Activated B cell treated with CpG ODN at 0.5 μM for 24 hours (primary cell): ENCODE measurements at regions of chr17 and their contacts with region 1.

Region 1: DNA sequence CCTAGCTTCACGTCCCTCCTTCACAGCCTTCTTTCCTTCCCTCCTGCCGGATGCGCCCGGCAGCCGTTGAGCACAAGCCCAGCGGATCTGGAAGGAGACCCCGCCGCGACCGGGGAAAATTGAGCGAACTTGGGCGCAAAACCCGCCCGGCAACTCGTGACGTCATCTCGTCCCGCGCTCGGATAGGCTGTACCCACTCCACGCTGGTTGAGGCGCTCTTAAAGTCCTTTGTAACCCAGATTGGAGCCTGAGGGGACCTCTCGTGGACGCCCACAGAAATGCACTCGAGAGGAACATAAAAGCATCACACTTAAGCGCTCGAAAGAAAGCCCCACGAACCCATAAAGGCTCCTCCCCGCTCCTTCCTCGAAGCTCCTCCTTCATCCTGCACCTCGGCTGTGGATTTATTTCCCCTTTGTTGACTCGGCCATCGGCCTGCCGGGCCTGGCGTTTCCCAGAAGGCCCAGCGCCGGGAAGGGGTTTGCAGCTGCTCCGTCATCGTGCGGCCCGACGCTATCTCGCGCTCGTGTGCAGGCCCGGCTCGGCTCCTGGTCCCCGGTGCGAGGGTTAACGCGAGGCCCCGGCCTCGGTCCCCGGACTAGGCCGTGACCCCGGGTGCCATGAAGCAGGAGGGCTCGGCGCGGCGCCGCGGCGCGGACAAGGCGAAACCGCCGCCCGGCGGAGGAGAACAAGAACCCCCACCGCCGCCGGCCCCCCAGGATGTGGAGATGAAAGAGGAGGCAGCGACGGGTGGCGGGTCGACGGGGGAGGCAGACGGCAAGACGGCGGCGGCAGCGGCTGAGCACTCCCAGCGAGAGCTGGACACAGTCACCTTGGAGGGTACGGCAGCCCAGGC is at the start of gene PSMD3:
- DNase-seq: peak; percentile 90
- ATAC-seq: peak; percentile 93
- H3K4me3 Mint-ChIP-seq: peak within 1 kb of the TSS; percentile 96
- H3K27ac Mint-ChIP-seq: peak within 1 kb of the TSS; percentile 96
- H3K4me1 Mint-ChIP-seq: peaks cover 36% of the 10 kb centered on the region
- H3K27me3 Mint-ChIP-seq: peaks cover under 1% of the 10 kb centered on the region
- CTCF ChIP-seq: no peak
- total RNA-seq, gene PSMD3: 115 and 127 TPM in 2 replicates

Region 2: GRCh38 chr17:39461113-39461925 is 519.3 kb before region 1 on chr17 and contains the start of gene CDK12:
- CTCF ChIA-PET with region 1: no interaction called
- POLR2A ChIA-PET with region 1: interaction called, 3 read pairs
- intact Hi-C with region 1: loop called (anchors 1 kb)
- DNase-seq: peak; percentile 87
- ATAC-seq: peak; percentile 87
- H3K4me3 Mint-ChIP-seq: peak within 1 kb of the TSS; percentile 97
- H3K27ac Mint-ChIP-seq: peak within 1 kb of the TSS; percentile 98
- H3K4me1 Mint-ChIP-seq: peaks cover 50% of the 10 kb centered on the region
- H3K27me3 Mint-ChIP-seq: no peaks in the 10 kb centered on the region
- CTCF ChIP-seq: no peak
- total RNA-seq, gene CDK12: 100 and 118 TPM in 2 replicates

Region 3: DNA sequence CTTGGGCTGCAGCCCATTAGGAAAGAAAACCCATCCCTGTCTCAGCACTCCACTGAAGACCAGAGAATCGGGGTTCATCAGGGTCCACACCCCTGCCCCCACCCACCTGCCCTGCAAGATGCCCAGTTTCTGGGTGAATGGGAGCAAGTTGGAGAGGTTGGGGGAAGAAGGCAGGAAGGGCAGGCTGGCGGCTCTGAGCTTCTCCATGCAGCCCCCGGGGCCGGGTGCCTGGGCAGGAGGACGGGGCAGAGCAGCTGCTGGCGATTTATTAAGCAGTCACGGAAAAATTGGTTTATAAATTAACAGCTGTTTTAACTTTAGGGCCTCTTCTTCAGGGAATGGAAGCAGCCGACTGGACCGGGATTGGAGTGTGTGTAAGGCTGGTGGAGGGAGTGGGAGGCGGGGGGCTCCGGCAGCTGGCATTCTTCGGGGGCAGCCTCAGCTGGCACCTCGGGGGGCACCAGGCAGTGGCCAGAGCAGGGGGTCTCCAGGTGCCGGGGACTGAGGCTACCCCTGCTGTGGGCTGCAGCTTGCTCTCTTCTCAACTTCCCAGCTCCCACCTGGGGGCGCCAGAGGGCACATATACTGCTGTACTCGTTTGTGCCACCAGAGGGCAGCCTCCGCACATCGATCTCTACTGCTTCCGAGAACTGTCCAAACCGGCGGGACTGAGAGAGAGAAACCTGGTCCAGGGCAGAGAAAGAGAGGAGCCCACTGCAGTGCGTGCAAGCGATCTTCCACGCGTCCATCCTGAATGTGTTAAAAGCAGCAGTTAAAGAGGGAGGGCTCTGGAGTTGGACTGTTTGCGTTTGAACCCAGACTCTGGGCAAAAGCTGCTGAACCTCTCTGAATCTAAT is 358.8 kb before region 1 on chr17:
- CTCF ChIA-PET with region 1: interaction called, 26 read pairs
- POLR2A ChIA-PET with region 1: interaction called, 17 read pairs
- intact Hi-C with region 1: loop called (anchors 1 kb)
- DNase-seq: peak; percentile 92
- ATAC-seq: peak; percentile 77
- H3K4me3 Mint-ChIP-seq: peak overlapping the region; percentile 70
- H3K27ac Mint-ChIP-seq: peak overlapping the region; percentile 60
- H3K4me1 Mint-ChIP-seq: peaks cover 26% of the 10 kb centered on the region
- H3K27me3 Mint-ChIP-seq: peaks cover 16% of the 10 kb centered on the region
- CTCF ChIP-seq: peak; percentile 97

Region 4: GRCh38 chr17:39730095-39730921 is 250.3 kb before region 1 on chr17 and contains the start of gene MIEN1:
- CTCF ChIA-PET with region 1: interaction called, 9 read pairs
- POLR2A ChIA-PET with region 1: interaction called, 14 read pairs
- intact Hi-C with region 1: loop called (anchors 1 kb)
- DNase-seq: peak; percentile 99
- ATAC-seq: peak; percentile 91
- H3K4me3 Mint-ChIP-seq: peak within 1 kb of the TSS; percentile 88
- H3K27ac Mint-ChIP-seq: peak within 1 kb of the TSS; percentile 86
- H3K4me1 Mint-ChIP-seq: peaks cover 21% of the 10 kb centered on the region
- H3K27me3 Mint-ChIP-seq: no peaks in the 10 kb centered on the region
- CTCF ChIP-seq: peak; percentile 64
- total RNA-seq, gene MIEN1: 42.2 and 45.7 TPM in 2 replicates

Region 5: DNA sequence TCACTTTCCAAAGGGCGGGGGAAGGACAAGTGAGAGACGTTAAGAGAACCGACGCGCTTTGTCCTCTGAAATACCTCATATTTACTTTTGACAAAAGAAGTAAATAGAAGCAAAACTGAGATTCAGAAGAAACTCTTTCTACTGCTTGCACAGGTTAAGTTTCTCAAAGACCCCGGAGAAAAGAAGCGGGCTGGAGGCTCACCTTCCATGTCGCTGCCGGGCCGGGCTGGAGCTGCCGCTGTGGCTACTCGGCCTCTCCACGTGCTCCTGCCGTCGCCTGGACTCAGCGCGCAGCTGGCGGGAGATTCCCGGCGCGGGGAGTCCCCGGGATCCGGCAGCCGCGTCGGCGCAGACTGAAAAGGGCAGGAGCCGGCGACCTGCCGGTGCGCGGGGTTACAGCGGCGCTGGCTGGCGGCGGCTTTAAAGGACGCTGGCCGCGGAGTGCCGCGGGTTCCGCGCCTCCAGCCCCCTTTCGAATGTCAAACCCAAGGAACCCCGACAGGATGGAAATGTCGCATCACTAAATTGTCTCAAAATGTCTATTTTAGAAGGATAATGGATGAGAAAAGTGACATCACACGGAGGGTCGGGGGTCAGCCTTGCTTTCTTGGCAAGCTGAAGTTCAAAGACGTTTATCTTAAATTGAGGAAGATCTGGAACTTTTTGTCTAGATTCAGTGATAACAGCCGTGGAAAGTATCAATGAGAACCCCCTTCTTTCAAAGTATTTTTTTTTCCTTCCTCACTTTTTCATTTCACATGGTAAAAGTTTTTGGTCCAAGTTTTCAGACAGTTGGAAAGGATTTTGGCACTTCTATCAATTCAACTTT is 116.4 kb before region 1 on chr17 and contains the start of gene IKZF3:
- CTCF ChIA-PET with region 1: interaction called, 3 read pairs
- POLR2A ChIA-PET with region 1: interaction called, 13 read pairs
- intact Hi-C with region 1: loop called (anchors 2 kb)
- DNase-seq: peak; percentile 78
- ATAC-seq: peak; percentile 58
- H3K4me3 Mint-ChIP-seq: peak within 1 kb of the TSS; percentile 98
- H3K27ac Mint-ChIP-seq: peak within 1 kb of the TSS; percentile 99
- H3K4me1 Mint-ChIP-seq: peaks cover 71% of the 10 kb centered on the region
- H3K27me3 Mint-ChIP-seq: no peaks in the 10 kb centered on the region
- CTCF ChIP-seq: no peak
- total RNA-seq, gene IKZF3: 208 and 220 TPM in 2 replicates

Region 6: DNA sequence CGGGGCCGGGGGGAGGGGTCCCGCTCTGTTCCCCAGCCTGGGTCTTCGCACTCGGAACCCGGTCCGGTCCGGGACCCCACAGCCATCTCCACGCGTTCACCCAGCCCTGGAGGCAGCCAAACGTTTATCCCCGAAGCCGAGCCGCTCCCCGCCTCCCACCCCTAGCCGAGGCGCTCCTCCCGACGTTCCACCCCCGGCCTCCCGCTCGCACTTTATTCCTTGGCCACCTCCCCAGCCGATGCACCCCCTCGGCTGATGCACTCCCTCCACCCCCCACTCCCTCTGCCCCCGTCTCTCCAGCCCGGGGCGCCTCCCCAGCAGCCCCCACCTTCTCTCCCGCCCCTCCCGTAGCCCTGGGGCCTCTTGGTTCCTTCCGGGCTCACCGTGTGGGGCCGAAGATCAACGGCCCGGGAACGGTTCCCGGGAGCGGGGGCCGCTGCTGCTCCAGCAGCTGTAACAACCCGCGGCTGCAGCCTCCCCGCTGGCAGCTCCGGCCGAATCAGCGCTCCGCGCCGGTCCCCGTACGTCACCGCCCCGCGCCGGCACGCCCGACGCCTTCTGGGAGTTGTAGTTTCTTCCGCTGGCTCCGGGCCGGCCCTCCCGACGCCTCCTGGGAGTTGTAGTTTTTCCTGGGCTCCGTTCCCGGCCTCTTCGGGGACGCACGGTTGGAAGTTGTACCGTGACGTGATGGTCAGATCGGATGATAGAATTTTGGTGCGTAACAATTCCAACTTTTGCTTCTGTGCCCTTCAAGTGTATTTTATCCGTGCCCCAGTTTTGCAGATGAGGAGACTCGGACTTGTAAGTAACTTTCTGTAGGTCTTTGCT is 53.3 kb before region 1 on chr17 and contains the starts of genes LRRC3C and ORMDL3:
- CTCF ChIA-PET with region 1: no interaction called
- POLR2A ChIA-PET with region 1: no interaction called
- intact Hi-C with region 1: loop called (anchors 1 kb)
- DNase-seq: peak; percentile 91
- ATAC-seq: peak; percentile 92
- H3K4me3 Mint-ChIP-seq: peak within 1 kb of the TSS; percentile 97
- H3K27ac Mint-ChIP-seq: peak within 1 kb of the TSS; percentile 82
- H3K4me1 Mint-ChIP-seq: peaks cover 40% of the 10 kb centered on the region
- H3K27me3 Mint-ChIP-seq: no peaks in the 10 kb centered on the region
- CTCF ChIP-seq: no peak
- total RNA-seq, gene LRRC3C: not detected in 2 replicates
- total RNA-seq, gene ORMDL3: 38.5 and 49.1 TPM in 2 replicates

Region 7: DNA sequence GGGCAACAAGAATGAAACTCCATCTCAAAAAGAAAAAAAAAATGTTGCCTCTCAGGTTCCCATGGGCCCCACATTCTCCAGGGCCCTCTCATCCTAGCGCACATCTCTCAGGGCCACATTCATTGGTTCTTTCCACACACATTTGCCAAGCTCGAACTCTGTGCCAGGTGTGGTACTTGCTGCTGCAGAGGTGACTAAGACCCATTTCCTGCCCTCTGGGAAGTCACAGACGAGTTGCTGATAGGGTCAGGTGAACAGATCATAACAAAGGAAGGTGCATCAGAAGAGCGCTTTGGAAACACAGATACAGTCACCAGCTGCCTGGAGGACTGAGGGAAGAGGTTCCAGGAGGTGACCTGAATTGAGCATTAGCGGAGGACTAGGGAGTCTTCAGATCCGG is 16.8 kb before region 1 on chr17:
- CTCF ChIA-PET with region 1: interaction called, 19 read pairs
- POLR2A ChIA-PET with region 1: interaction called, 30 read pairs
- intact Hi-C with region 1: loop called (anchors 1 kb)
- DNase-seq: no peak
- ATAC-seq: no peak
- H3K4me3 Mint-ChIP-seq: no peak overlapping the region
- H3K27ac Mint-ChIP-seq: no peak overlapping the region
- H3K4me1 Mint-ChIP-seq: peaks cover 13% of the 10 kb centered on the region
- H3K27me3 Mint-ChIP-seq: peaks cover 11% of the 10 kb centered on the region
- CTCF ChIP-seq: no peak